HepG2 (cell line): ENCODE measurements at regions of chr4 and their contacts with region 1.

Region 1: DNA sequence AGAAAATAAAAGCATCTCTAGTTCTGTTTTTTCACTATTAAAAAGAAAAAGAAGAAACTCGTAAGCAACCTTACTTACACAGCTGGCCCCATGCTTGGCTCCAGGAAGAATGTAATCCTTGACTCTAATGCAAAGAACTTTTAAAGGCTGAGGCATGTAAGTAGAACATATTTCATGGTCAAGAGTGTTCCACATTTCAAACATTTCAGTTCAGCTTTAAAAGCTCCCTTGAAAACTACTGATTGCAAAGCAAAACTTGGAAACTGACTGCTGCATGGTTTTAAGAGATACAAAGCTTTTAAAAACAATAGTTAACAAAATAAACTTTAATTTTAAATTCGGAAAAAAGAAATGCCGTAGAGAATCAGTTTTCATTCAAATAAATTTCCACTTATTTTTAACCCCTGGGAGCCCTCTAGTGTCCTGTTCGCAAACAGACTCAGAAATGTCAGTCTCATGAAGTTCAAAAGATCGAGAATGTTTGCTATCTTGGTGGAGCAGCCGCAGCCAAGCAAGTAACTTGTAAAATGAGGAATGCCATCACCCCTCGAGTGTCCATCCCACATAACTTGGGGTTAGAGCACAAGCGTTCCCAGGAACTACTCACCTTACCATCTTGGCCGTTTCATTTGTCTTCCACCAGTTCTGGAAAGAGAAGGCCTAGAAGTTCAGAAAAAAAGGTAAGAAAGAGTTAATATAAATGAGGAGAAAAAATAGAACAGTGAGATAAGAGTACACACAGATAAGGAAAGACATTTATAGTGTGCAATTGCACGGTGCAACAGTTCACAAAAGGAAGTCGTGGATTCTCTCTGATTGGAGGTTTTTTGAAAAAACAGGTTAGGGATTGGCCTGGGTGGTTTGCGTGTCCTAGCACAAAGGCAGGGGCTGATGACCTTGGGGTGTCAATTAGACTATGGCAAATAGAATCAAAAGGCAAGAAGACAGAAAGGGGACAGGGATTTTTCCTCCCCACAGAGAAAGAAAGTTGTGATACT is at the start of gene GASK1B:
- DNase-seq: peak; percentile 81
- ATAC-seq: peak; percentile 58
- H3K4me3 ChIP-seq: peak within 1 kb of the TSS; percentile 73 to 87 (median 78)
- H3K27ac ChIP-seq: peak within 1 kb of the TSS; percentile 79
- H3K4me1 ChIP-seq: peaks cover 75% of the 10 kb centered on the region
- H3K27me3 ChIP-seq: no peaks in the 10 kb centered on the region
- CTCF ChIP-seq: peak; percentile 65
- EP300 ChIP-seq: peak in 1 of 2 experiments; percentile 38; a peak in 1 of 4 replicates
- POLR2A ChIP-seq: no peak
- RAD21 ChIP-seq: peak; percentile 34; the same call in 1 of the 2 replicates
- total RNA-seq, gene GASK1B: 40.4 and 50.0 TPM in 2 replicates

Region 2: GRCh38 chr4:157514711-157515110 is 657.8 kb before region 1 on chr4:
- CTCF ChIA-PET with region 1: no interaction called
- POLR2A ChIA-PET with region 1: no interaction called
- in situ Hi-C with region 1: no loop called
- intact Hi-C with region 1: loop called (anchors 10 kb)
- DNase-seq: peak; percentile 7
- ATAC-seq: peak; percentile 93
- H3K4me3 ChIP-seq: no peak overlapping the region
- H3K27ac ChIP-seq: no peak overlapping the region
- H3K4me1 ChIP-seq: no peaks in the 10 kb centered on the region
- H3K27me3 ChIP-seq: no peaks in the 10 kb centered on the region
- CTCF ChIP-seq: peak; percentile 71
- EP300 ChIP-seq: no peak
- POLR2A ChIP-seq: no peak
- RAD21 ChIP-seq: 0 out of 2 replicates have a peak, but pooled peaks have one; percentile 17

Region 3: DNA sequence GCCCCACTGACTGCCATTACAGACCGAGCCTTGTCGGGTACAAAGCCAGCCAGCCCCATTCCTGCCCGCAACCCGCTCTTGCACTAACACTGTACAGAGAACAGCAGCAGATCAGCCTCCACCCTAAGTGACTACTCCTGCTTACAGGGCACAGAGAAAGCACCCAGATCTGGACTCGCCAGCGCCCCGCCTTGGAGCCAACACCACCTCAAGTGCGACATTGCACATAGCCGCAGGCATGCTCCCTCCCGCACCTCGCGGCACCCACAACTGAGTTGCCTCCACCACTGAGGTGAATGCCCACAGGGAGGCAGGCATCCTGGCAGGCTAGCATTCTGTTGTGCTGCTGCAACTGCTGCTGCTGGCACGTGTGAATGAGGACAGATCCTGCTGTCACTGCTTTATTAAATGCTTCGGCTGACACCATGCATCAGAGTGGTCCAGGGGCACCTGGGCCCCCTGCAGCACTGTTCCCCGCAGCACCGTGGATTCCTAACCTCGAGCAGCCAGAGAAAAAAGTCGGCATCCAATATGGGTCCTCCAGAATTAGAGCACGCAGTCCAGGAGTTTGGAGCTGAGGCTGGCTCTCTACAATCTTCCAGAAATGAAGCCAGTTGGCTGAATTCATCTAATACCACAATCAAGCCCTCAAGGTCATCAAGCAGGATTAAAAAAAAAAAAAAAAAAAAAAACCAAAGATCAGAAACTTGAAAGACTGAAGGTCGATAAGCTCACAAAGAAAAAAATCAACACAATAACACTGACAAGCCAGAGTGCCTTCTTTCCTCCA is 352.7 kb before region 1 on chr4:
- CTCF ChIA-PET with region 1: no interaction called
- POLR2A ChIA-PET with region 1: no interaction called
- in situ Hi-C with region 1: no loop called
- intact Hi-C with region 1: loop called (anchors 10 kb)
- DNase-seq: no peak
- ATAC-seq: peak; percentile 62
- H3K4me3 ChIP-seq: no peak overlapping the region; a peak in 1 of 6 replicates
- H3K27ac ChIP-seq: no peak overlapping the region
- H3K4me1 ChIP-seq: peaks cover 23% of the 10 kb centered on the region
- H3K27me3 ChIP-seq: no peaks in the 10 kb centered on the region
- CTCF ChIP-seq: peak; percentile 19
- EP300 ChIP-seq: no peak
- POLR2A ChIP-seq: no peak
- RAD21 ChIP-seq: no peak